GM18951 (cell line): ENCODE measurements at regions of chr5 and their contacts with region 1.

Region 1: GRCh38 chr5:159106569-159107282 is 7.0 kb upstream of the EBF1 start:
- POLR2A ChIP-seq: peak; percentile 25

Region 2: GRCh38 chr5:158695595-158696330 is 411.0 kb before region 1 on chr5:
- in situ Hi-C with region 1: loop called (anchors 5 kb)
- POLR2A ChIP-seq: no peak

Region 3: DNA sequence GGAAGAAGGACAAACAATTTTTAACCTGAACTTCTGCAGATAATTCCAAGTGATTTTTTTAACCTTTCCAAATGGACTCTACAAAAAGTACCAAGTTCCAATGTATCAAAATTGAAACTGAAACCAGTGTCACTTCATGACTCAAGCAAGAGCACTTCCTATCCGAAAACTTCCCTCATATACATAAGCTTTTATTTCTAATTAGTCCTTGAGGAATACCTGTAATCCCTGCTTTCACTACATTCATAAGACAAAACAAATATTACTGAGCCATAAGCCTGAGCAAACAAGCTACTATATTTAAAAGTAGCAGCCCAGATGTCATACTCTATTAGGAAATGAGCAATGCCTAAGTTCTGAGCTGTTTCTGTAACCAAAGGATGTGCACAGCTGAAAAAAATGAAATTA is 231.4 kb before region 1 on chr5:
- in situ Hi-C with region 1: loop called (anchors 10 kb)
- POLR2A ChIP-seq: no peak

Region 4: DNA sequence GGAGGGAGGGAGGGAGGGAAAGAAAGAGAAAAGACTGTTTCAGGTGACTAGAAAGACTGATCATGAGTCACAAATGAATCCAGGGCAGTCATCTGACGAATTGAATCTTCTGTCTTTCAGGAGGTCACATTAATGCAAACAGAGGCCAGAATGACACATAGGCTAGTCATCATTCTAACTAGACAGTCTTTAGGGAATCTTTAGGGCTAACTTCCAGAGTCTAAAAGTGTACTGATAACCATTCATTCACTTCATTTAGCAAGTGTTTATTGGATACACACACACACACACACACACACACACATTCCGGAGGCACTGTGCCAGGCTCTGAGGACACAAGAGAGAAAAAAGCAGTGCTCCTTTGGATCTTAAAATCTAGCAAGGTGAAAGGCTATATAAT is 163.7 kb before region 1 on chr5:
- in situ Hi-C with region 1: loop called (anchors 10 kb)
- POLR2A ChIP-seq: no peak